Activated B cell treated with CpG ODN at 0.5 μM for 24 hours (primary cell): ENCODE measurements at regions of chr7 and their contacts with region 1.

Region 1: DNA sequence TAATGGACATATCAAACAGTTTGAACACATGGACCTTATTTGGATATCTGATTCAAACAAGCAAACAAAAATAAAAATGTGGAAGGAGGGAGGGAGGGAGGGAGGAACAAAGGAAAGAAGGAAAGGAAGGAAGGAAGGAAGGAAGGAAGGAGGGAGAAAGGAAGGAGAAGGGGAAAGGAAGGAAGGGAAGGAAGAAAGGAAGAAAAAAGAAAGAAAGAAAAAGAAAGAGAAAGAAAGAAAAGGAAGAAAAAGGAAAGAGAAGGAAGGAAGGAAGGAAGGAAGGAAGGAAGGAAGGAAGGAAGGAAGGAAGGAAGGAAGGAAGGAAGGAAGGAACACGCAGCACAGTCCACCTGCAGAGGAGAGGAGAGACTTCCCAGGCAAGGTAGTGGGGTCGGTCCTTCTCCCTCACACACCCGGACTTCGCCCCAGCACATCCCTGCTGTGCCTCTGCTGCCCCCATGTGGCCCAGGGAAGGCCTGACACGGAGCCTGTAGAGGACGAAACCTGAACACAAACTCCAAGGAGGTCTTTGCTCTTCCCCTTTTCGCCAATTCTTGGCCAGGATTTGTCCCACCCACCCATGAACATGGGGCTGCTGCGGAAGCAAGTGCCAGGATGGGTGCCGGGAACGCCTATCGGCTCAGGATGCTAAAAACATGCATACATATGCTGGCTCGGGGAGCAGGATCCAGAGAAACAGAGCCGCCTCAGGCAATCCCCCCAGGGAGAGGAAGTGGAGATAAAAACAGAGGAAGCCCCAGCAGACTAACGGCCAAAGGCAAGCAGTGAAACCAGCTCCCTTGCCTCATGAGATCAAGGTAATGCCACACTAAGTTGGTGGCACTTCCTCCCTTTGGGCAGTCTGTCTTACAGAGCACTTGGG is 52.3 kb upstream of the DGKI start:
- DNase-seq: peak; percentile 67
- ATAC-seq: peak; percentile 95
- H3K4me3 Mint-ChIP-seq: peak overlapping the region; percentile 75
- H3K27ac Mint-ChIP-seq: peak overlapping the region; percentile 61
- H3K4me1 Mint-ChIP-seq: peaks cover 24% of the 10 kb centered on the region
- H3K27me3 Mint-ChIP-seq: no peaks in the 10 kb centered on the region
- CTCF ChIP-seq: peak; percentile 59

Region 2: GRCh38 chr7:137606061-137606674 is 292.9 kb before region 1 on chr7:
- CTCF ChIA-PET with region 1: interaction called, 4 read pairs
- POLR2A ChIA-PET with region 1: no interaction called
- intact Hi-C with region 1: loop called (anchors 1 kb)
- DNase-seq: no peak
- ATAC-seq: no peak
- H3K4me3 Mint-ChIP-seq: no peak overlapping the region
- H3K27ac Mint-ChIP-seq: no peak overlapping the region
- H3K4me1 Mint-ChIP-seq: no peaks in the 10 kb centered on the region
- H3K27me3 Mint-ChIP-seq: no peaks in the 10 kb centered on the region
- CTCF ChIP-seq: no peak

Region 3: GRCh38 chr7:137934941-137935883 is 36.1 kb after region 1 on chr7:
- CTCF ChIA-PET with region 1: interaction called, 3 read pairs
- POLR2A ChIA-PET with region 1: no interaction called
- intact Hi-C with region 1: loop called (anchors 2 kb)
- DNase-seq: no peak
- ATAC-seq: peak; percentile 73
- H3K4me3 Mint-ChIP-seq: peak overlapping the region; percentile 78
- H3K27ac Mint-ChIP-seq: peak overlapping the region; percentile 81
- H3K4me1 Mint-ChIP-seq: peaks cover 40% of the 10 kb centered on the region
- H3K27me3 Mint-ChIP-seq: no peaks in the 10 kb centered on the region
- CTCF ChIP-seq: no peak

Region 4: GRCh38 chr7:138002096-138002827 is 103.2 kb after region 1 on chr7:
- CTCF ChIA-PET with region 1: interaction called, 121 read pairs
- POLR2A ChIA-PET with region 1: interaction called, 5 read pairs
- intact Hi-C with region 1: no loop called
- DNase-seq: peak; percentile 93
- ATAC-seq: peak; percentile 90
- H3K4me3 Mint-ChIP-seq: peak overlapping the region; percentile 98
- H3K27ac Mint-ChIP-seq: peak overlapping the region; percentile 90
- H3K4me1 Mint-ChIP-seq: peaks cover 37% of the 10 kb centered on the region
- H3K27me3 Mint-ChIP-seq: no peaks in the 10 kb centered on the region
- CTCF ChIP-seq: peak; percentile 94

Region 5: DNA sequence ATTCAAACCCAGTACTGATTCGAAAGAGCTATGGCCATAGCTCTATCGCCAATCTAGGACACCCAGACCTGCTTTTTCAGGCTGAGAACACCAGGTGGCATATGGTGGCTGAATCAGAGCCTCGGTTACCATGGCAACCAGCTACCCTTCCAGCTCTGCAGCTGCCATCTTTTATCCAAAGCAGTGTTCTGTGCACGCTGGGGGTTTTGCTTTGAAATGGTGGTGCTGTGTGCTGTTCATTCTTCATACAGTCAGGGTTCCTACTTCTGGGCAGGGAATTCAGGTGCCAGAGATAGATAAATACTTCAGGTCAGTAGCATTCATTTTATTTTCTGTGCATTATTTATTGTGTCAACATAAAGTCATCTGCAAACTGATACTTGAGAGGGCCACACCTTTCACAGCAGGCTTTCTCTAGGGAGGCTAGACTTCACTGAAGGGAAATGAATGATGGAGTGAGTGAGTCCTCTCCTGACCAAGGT is 262.6 kb after region 1 on chr7:
- CTCF ChIA-PET with region 1: interaction called, 4 read pairs
- POLR2A ChIA-PET with region 1: no interaction called
- intact Hi-C with region 1: loop called (anchors 1 kb)
- DNase-seq: no peak
- ATAC-seq: peak; percentile 99
- H3K4me3 Mint-ChIP-seq: no peak overlapping the region
- H3K27ac Mint-ChIP-seq: no peak overlapping the region
- H3K4me1 Mint-ChIP-seq: no peaks in the 10 kb centered on the region
- H3K27me3 Mint-ChIP-seq: no peaks in the 10 kb centered on the region
- CTCF ChIP-seq: no peak

Region 6: DNA sequence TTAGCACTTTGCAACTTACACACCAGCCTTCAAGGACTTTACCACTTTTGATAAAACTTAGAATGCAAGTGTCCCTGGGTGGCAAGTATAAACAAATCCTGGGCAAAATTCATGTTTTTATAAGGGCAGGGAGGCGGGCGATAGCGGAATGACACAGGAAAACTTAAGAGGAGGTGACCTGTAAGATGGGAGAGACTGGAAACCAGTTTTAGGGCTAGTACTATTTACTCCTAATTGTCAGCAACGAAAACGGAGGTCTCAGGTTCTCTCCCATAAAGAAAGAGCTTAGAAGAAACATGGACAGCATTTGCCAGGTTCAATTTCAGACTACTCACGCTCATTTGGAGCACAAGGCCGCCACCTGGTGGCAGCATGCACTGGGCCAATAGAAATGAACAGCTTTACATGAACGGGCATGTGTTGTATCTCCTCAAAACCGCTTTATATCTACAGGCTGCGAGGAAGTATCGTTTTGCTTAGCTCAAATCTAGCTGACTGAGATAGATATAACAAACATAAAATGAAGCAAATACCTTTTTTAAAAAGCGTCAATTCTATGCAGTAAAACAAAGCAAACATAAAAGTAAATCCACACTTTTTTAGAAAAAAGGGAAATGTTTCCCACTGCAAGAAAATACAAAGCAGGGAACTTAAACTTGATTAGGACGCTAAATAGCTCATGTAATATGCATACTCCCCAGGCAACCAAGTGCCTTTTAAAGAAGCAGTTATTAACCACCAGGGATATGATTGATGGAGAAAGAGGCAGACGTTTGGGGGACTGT is 839.7 kb after region 1 on chr7:
- CTCF ChIA-PET with region 1: interaction called, 9 read pairs
- POLR2A ChIA-PET with region 1: no interaction called
- intact Hi-C with region 1: loop called (anchors 1 kb)
- DNase-seq: peak; percentile 38
- ATAC-seq: no peak
- H3K4me3 Mint-ChIP-seq: no peak overlapping the region
- H3K27ac Mint-ChIP-seq: no peak overlapping the region
- H3K4me1 Mint-ChIP-seq: no peaks in the 10 kb centered on the region
- H3K27me3 Mint-ChIP-seq: peaks cover 4% of the 10 kb centered on the region
- CTCF ChIP-seq: peak; percentile 26